Ovary (tissue), 10 donors: ENCODE measurements at regions of chr3 and their contacts with region 1.

Region 1: DNA sequence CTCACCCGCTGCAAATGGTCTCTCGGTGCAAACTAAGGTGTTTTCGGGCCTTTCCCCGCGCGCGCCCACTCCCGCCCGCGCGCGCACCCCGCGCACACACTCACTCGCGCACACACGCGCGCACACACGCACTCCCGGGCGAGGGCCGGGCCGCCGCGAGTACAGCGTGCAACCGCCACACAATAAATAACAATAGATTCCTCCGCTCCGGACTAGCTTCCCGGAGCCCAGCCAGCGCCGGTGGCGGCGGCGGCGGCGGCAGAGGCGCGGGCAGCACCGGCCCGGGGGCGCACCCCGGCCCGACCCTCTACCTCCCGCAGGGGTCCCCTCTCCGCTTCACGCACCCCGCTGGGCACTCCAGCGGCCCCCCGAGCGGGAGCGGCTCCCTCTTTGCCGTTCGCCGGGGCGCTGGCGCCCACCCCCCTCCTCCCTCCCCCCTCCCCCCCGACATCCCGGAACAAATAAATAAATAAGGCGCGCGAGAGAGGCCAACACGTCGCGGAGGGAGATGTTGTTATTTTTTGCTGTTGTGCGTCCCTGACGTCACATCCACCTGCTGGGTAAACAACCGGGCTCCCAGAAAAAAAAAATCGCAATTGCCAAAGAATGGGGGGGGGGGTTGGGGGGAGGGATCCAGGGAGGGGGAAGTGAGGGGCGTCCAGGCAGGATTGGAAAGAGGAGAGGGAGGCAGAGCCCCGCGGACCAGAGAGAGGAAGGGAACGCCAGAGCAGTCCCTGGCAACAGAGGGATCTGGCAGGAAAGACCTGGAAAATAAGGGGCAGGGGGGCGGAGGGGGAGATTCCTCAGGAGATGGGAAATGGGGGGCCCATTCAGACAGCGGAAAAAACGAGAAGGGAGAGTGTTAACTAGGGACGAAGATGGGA is at the start of gene FOXP1:
- DNase-seq: peak; percentile 68 to 85 (median 81)
- H3K4me3 ChIP-seq: peak within 1 kb of the TSS; percentile 86
- H3K27ac ChIP-seq: peak within 1 kb of the TSS; percentile 99 to 100
- H3K4me1 ChIP-seq: peaks cover 2% of the 10 kb centered on the region
- H3K27me3 ChIP-seq: no peaks in the 10 kb centered on the region
- CTCF ChIP-seq: no peak
- EP300 ChIP-seq: no peak
- POLR2A ChIP-seq: peak; percentile 42
- total RNA-seq, gene FOXP1: 89.4 to 126 (median 119) TPM

Region 2: GRCh38 chr3:70527032-70527431 is 1056.8 kb before region 1 on chr3:
- intact Hi-C with region 1: loop called in 1 of 4 experiments (anchors 5 kb)
- DNase-seq: no peak
- H3K4me3 ChIP-seq: no peak overlapping the region
- H3K27ac ChIP-seq: no peak overlapping the region
- H3K4me1 ChIP-seq: no peaks in the 10 kb centered on the region
- H3K27me3 ChIP-seq: no peaks in the 10 kb centered on the region
- CTCF ChIP-seq: no peak
- EP300 ChIP-seq: no peak
- POLR2A ChIP-seq: no peak

Region 3: DNA sequence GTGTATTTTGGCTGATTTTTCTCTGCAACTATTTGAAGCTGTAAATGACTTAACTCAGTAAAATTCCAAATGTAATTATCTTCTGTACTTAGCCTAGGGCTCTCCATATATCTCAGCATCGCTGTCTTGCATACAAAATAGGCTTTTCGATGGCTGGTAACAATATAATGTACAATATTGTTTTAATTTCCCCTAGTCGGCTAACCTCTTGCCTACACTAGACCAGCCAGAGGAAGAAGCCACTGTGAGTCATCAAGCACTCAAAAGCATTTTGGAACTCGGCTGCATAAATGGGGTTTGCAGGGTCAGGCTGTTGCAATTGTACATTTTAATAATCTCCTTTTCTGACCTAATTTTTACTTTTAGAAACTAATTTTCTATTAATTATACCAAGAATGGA is 584.1 kb before region 1 on chr3:
- intact Hi-C with region 1: loop called in 1 of 4 experiments (anchors 10 kb)
- DNase-seq: no peak
- H3K4me3 ChIP-seq: no peak overlapping the region
- H3K27ac ChIP-seq: no peak overlapping the region
- H3K4me1 ChIP-seq: peaks cover 4% of the 10 kb centered on the region
- H3K27me3 ChIP-seq: no peaks in the 10 kb centered on the region
- CTCF ChIP-seq: no peak
- EP300 ChIP-seq: no peak
- POLR2A ChIP-seq: no peak

Region 4: GRCh38 chr3:71069797-71070196 is 514.0 kb before region 1 on chr3:
- intact Hi-C with region 1: loop called in 2 of 4 experiments (anchors 5 to 10 kb)
- DNase-seq: peak; percentile 39 to 64 (median 55)
- H3K4me3 ChIP-seq: no peak overlapping the region
- H3K27ac ChIP-seq: no peak overlapping the region
- H3K4me1 ChIP-seq: peaks cover 23% of the 10 kb centered on the region
- H3K27me3 ChIP-seq: no peaks in the 10 kb centered on the region
- CTCF ChIP-seq: peak in 1 of 3 donors; percentile 11
- EP300 ChIP-seq: no peak
- POLR2A ChIP-seq: no peak

Region 5: DNA sequence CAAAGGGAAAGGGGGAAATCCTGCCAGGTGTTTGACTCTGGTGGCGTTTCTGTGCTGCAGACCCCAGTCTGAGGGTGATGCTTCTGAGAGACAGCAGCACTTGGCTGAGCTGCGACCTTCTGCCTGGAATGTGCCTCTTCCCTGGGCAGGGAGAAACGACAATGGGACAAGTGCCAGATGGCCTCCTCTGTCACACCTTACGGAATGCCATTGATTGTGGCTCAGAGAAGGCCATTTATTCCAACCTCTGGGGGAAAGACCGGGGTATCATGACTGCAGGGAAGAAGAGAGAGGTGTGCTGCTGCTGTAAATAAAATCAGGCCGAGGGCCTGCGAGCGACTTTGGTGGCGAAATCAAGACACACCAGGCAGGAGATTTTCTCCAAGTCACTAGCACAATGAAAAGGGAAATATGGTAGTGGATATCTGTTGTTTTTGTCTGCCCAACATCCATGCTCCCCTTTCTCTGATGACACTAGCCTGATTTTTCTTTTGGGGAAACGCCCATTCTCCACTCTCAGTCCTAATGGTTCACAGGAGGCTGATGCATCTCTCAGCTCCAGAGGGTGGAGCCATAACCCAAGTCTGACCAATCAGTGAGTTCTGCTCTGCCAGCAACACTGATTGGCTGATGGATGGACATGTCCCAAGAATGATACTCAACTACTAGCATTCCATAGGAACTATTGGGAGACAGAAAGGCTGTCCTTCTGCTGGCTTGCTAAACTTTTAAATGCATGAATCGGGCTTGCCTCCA is 336.4 kb before region 1 on chr3:
- intact Hi-C with region 1: loop called in 1 of 4 experiments (anchors 10 kb)
- DNase-seq: no peak
- H3K4me3 ChIP-seq: no peak overlapping the region
- H3K27ac ChIP-seq: no peak overlapping the region
- H3K4me1 ChIP-seq: peaks cover 8% of the 10 kb centered on the region
- H3K27me3 ChIP-seq: no peaks in the 10 kb centered on the region
- CTCF ChIP-seq: no peak
- EP300 ChIP-seq: no peak
- POLR2A ChIP-seq: no peak